WTC11 (cell line): ENCODE measurements at regions of chr9 and their contacts with region 1.

Region 1: DNA sequence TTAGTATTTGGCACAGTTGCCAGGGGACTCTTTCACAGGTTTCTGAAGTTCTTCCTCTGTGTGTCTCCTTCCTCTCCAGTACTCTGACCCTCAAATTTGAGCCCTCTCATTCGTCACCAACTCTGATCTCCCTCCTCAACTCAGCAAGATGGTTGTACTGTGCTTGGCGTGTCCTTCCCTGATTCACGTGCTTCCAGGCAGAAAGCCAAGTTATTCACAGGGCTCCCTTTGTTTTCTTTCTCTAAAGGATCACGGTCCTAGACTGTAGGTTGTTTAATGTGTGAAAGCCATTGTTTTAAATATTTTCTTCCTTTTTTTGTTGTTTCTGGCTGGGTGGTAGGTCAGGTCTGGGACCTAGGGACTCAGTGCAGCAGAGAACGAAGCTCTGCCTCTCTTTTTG is 142.9 kb downstream of the DMAC1 start:
- DNase-seq: no peak
- ATAC-seq: no peak
- H3K4me3 Mint-ChIP-seq: no peak overlapping the region
- H3K27ac Mint-ChIP-seq: no peak overlapping the region
- H3K4me1 Mint-ChIP-seq: no peaks in the 10 kb centered on the region
- H3K27me3 Mint-ChIP-seq: no peaks in the 10 kb centered on the region
- CTCF ChIP-seq: no peak

Region 2: GRCh38 chr9:7570107-7570720 is 86.4 kb before region 1 on chr9:
- CTCF ChIA-PET with region 1: interaction called, 13 read pairs
- POLR2A ChIA-PET with region 1: no interaction called
- DNase-seq: peak; percentile 70
- ATAC-seq: peak; percentile 74
- H3K4me3 Mint-ChIP-seq: no peak overlapping the region
- H3K27ac Mint-ChIP-seq: no peak overlapping the region
- H3K4me1 Mint-ChIP-seq: peaks cover 2% of the 10 kb centered on the region; the same call in 1 of the 2 replicates
- H3K27me3 Mint-ChIP-seq: no peaks in the 10 kb centered on the region
- CTCF ChIP-seq: peak; percentile 75

Region 3: GRCh38 chr9:7592321-7593316 is 64.0 kb before region 1 on chr9:
- CTCF ChIA-PET with region 1: no interaction called
- POLR2A ChIA-PET with region 1: no interaction called
- DNase-seq: no peak
- ATAC-seq: peak; percentile 97
- H3K4me3 Mint-ChIP-seq: peak overlapping the region; percentile 38
- H3K27ac Mint-ChIP-seq: no peak overlapping the region
- H3K4me1 Mint-ChIP-seq: peaks cover 13% of the 10 kb centered on the region
- H3K27me3 Mint-ChIP-seq: no peaks in the 10 kb centered on the region
- CTCF ChIP-seq: peak; percentile 26

Region 4: DNA sequence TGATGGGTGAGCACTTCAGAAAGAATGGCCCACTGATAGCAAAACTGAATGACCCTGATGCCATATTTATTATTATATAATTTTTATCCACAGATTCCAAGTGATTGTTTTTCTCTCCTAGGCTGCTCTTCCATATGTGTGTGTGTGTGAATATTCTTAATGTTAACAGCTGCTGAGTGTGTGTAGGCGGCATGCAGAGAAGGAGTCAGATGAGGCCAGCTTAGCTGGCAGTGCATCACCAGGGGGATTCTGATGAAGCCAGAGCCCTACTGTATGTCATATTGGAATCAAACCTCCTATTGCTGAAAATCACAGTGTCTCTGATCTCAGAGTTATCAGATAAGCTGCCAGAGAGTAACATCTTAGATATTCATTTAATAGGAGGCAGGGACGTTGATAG is 34.2 kb before region 1 on chr9:
- CTCF ChIA-PET with region 1: interaction called, 14 read pairs
- POLR2A ChIA-PET with region 1: no interaction called
- DNase-seq: no peak
- ATAC-seq: no peak
- H3K4me3 Mint-ChIP-seq: no peak overlapping the region
- H3K27ac Mint-ChIP-seq: no peak overlapping the region
- H3K4me1 Mint-ChIP-seq: peaks cover 28% of the 10 kb centered on the region
- H3K27me3 Mint-ChIP-seq: peaks cover 15% of the 10 kb centered on the region
- CTCF ChIP-seq: no peak

Region 5: DNA sequence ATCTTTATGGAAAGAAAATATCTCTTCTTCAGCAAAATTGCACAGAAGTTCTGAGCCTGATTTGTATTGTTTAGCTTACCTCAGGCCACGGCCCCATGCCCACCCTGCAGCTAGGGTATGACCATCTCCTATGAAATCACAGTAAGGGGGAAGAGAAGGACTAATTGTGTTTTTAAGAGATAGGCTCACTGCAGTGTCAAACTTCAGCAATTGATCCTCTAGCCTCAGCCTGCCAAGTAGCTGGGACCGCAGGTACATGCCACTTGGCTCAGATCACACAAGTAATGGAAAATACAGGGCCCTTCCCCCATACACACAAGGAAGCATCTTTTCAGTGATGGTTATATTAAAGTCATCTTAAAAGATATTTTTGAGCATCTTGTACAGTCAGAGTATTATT is 83.0 kb after region 1 on chr9:
- CTCF ChIA-PET with region 1: no interaction called
- POLR2A ChIA-PET with region 1: no interaction called
- DNase-seq: no peak
- ATAC-seq: peak; percentile 22; the same call in 1 of the 2 replicates
- H3K4me3 Mint-ChIP-seq: no peak overlapping the region
- H3K27ac Mint-ChIP-seq: no peak overlapping the region
- H3K4me1 Mint-ChIP-seq: peaks cover 2% of the 10 kb centered on the region; the same call in 1 of the 2 replicates
- H3K27me3 Mint-ChIP-seq: no peaks in the 10 kb centered on the region
- CTCF ChIP-seq: no peak